ENCODE measurements at regions of chr12 and their contacts with region 1.

Region 1: DNA sequence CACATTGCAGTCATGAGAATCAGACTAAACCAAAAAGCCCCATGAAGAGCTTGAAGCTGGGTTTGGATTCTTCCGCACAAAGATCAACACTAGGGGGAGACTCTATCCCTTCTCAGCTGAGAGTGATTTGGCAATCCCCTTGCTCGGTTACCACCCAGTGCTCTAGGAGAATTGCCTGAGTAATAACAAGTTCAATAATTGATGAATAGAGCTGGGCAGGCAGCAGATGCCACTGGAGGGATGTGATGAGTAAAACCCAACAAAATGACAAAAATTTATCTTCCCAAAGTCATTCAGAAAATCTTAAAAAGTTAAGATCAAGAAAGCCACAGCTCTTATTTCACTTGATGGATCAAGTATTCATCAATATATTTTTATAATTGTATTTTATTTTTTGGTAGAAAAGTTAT is 185.6 kb upstream of the ARID2 start:
- DNase-seq: peak in 1 of 2 donors; percentile 57
- ATAC-seq: peak in 7 of 8 donors; percentile 75 to 89 (median 84)
- H3K4me3 ChIP-seq: no peak overlapping the region
- H3K27ac ChIP-seq: no peak overlapping the region
- H3K4me1 ChIP-seq: peaks cover 0 to 3% (median 0%) of the 10 kb centered on the region in 9 donors
- H3K27me3 ChIP-seq: no peaks in the 10 kb centered on the region
- CTCF ChIP-seq: peak; percentile 52 to 86 (median 80)

Region 2: GRCh38 chr12:45587877-45588533 is 44.1 kb after region 1 on chr12:
- intact Hi-C with region 1: no loop called
- DNase-seq: peak in 1 of 2 donors; percentile 12
- ATAC-seq: peak in 4 of 8 donors; percentile 56 to 71 (median 67)
- H3K4me3 ChIP-seq: no peak overlapping the region
- H3K27ac ChIP-seq: no peak overlapping the region
- H3K4me1 ChIP-seq: peaks cover 0 to 3% (median 0%) of the 10 kb centered on the region in 9 donors
- H3K27me3 ChIP-seq: no peaks in the 10 kb centered on the region
- CTCF ChIP-seq: peak in 6 of 9 donors; percentile 11 to 39 (median 16)

Region 3: DNA sequence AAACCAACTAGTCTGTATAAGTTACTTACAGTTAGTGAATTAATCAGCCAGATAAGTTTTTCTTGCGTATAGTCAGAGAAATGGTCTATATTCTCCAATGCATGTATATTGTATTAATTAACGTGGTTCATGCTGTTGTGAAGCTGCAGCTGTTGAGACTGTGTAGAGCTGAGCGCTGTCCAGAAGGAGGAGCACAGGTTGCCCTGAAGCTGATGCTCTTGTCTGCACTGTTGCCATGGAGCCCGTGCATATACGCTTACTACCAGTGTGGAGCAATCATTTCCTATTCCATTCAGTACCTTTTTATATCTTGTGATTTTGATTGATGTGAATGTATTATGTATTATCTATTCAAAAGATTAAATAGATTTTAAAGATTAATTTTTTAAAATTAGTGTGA is 111.3 kb after region 1 on chr12:
- intact Hi-C with region 1: no loop called
- DNase-seq: no peak
- ATAC-seq: no peak
- H3K4me3 ChIP-seq: no peak overlapping the region
- H3K27ac ChIP-seq: no peak overlapping the region
- H3K4me1 ChIP-seq: peaks cover 0 to 3% (median 0%) of the 10 kb centered on the region in 9 donors
- H3K27me3 ChIP-seq: no peaks in the 10 kb centered on the region
- CTCF ChIP-seq: peak in 1 of 9 donors; percentile 9

Region 4: DNA sequence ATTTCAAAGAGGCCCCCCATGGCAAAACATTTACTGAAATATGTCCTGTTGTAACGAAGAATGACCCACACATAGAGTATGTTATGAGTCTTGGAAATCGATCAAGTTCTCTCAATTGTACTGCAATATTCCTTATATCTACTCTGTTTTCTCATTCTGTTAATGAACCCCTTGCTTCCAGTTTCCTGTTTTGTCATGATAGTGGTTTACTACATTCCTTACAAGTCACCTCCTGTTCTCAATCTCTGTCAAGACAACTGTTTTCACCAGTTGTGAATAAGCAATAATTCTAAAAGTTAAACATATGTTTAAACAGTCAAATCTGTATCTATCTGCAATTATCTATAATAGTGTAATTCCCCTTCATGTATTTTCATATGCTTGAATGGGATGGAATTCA is 169.2 kb after region 1 on chr12:
- intact Hi-C with region 1: loop called in 1 of 10 experiments (anchors 10 kb)
- DNase-seq: no peak
- ATAC-seq: no peak
- H3K4me3 ChIP-seq: no peak overlapping the region
- H3K27ac ChIP-seq: no peak overlapping the region
- H3K4me1 ChIP-seq: peaks cover 0 to 29% (median 5%) of the 10 kb centered on the region in 9 donors
- H3K27me3 ChIP-seq: no peaks in the 10 kb centered on the region
- CTCF ChIP-seq: no peak

Region 5: DNA sequence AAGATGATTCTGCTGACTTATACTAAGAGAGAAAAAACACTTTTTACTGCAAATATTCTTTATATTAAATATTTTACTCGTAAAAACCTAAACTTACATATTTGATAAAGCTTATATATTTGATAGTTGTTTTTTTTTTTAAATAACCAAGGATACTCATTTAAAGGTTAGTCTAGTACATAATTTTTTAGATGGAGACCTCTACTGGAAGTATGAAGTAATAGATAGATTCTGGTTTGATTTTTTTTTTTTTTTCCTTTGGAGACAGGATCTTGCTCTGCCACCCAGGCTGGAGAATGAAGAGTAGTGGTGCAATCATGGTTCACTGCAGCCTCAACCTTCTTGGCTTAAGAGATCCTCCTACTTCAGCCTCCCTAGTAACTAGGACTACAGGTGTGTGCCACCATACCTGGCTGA is 202.0 kb after region 1 on chr12:
- intact Hi-C with region 1: loop called in 7 of 10 experiments (anchors 5 to 10 kb)
- DNase-seq: no peak
- ATAC-seq: peak in 5 of 8 donors; percentile 10 to 54 (median 29)
- H3K4me3 ChIP-seq: no peak overlapping the region
- H3K27ac ChIP-seq: no peak overlapping the region
- H3K4me1 ChIP-seq: peaks cover 0 to 16% (median 10%) of the 10 kb centered on the region in 9 donors
- H3K27me3 ChIP-seq: no peaks in the 10 kb centered on the region
- CTCF ChIP-seq: peak; percentile 8 to 62 (median 46)

Region 6: DNA sequence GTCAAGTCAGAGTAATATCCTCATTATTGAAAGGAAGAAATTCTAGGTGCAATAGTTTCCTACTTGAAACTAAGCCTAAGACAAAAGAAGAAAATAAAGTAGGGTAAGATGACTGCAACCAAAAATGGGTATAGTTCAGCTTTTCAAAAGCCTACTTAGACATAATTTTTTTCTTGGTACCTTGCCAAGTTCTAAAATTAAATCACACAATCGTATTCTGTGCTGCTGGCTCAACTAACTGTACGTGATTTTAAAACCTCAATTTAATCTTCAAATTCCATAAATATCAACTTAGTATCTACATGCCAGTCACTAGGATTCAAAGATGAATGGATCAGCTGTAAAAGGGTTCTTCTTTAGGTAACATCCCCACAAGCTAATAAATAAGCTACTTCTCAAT is 389.6 kb after region 1 on chr12:
- intact Hi-C with region 1: loop called in 1 of 10 experiments (anchors 5 kb)
- DNase-seq: no peak
- ATAC-seq: peak in 2 of 8 donors; percentile 29 to 34
- H3K4me3 ChIP-seq: no peak overlapping the region
- H3K27ac ChIP-seq: peak overlapping the region in 1 of 10 donors; percentile 34
- H3K4me1 ChIP-seq: peaks cover 0 to 24% (median 14%) of the 10 kb centered on the region in 9 donors
- H3K27me3 ChIP-seq: no peaks in the 10 kb centered on the region
- CTCF ChIP-seq: no peak

Region 7: GRCh38 chr12:45944771-45945170 is 400.9 kb after region 1 on chr12:
- intact Hi-C with region 1: no loop called
- DNase-seq: no peak
- ATAC-seq: no peak
- H3K4me3 ChIP-seq: no peak overlapping the region
- H3K27ac ChIP-seq: no peak overlapping the region
- H3K4me1 ChIP-seq: peaks cover 0 to 11% (median 0%) of the 10 kb centered on the region in 9 donors
- H3K27me3 ChIP-seq: no peaks in the 10 kb centered on the region
- CTCF ChIP-seq: no peak